HepG2 (cell line): ENCODE measurements at regions of chr6 and their contacts with region 1.

Region 1: DNA sequence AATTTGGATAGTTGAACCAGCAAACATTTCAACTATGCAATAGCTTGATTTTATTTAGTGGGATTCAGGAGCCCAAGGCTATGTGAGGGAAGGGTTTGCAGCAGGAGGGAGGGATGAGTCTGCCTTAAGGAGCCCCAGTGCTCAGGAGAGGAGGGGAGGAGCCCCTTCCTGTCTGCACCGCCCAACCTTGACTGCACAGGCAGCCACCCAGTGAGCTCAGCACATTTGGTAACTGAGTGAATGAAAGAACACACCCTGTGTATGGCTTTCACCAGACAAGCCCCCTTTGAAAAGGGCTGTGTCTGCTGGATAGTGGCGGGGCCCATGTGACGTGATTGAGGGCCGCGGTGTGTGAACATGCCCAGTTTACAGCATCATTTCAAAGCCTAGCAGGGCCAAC is 17.0 kb downstream of the DACT2 start:
- DNase-seq: peak; percentile 71
- ATAC-seq: peak; percentile 21
- H3K4me3 ChIP-seq: peak overlapping the region; percentile 48 to 69 (median 62)
- H3K27ac ChIP-seq: peak overlapping the region; percentile 65
- H3K4me1 ChIP-seq: peaks cover 44% of the 10 kb centered on the region
- H3K27me3 ChIP-seq: no peaks in the 10 kb centered on the region
- CTCF ChIP-seq: no peak
- EP300 ChIP-seq: no peak
- POLR2A ChIP-seq: no peak
- RAD21 ChIP-seq: no peak

Region 2: GRCh38 chr6:168194028-168194721 is 108.4 kb before region 1 on chr6:
- CTCF ChIA-PET with region 1: no interaction called
- POLR2A ChIA-PET with region 1: interaction called, 12 read pairs
- in situ Hi-C with region 1: no loop called
- intact Hi-C with region 1: no loop called
- DNase-seq: peak; percentile 60
- ATAC-seq: peak; percentile 75
- H3K4me3 ChIP-seq: peak overlapping the region in 1 of 3 experiments; percentile 17; a peak in 1 of 6 replicates
- H3K27ac ChIP-seq: no peak overlapping the region
- H3K4me1 ChIP-seq: peaks cover 69% of the 10 kb centered on the region
- H3K27me3 ChIP-seq: peaks cover 2 to 16% of the 10 kb centered on the region in 2 experiments; a peak in 4 of 5 replicates
- CTCF ChIP-seq: peak; percentile 93
- EP300 ChIP-seq: no peak
- POLR2A ChIP-seq: no peak
- RAD21 ChIP-seq: peak; percentile 94

Region 3: GRCh38 chr6:168247443-168248147 is 54.9 kb before region 1 on chr6:
- CTCF ChIA-PET with region 1: no interaction called
- POLR2A ChIA-PET with region 1: interaction called, 13 read pairs
- in situ Hi-C with region 1: no loop called
- intact Hi-C with region 1: loop called (anchors 5 kb)
- DNase-seq: peak; percentile 40
- ATAC-seq: peak; percentile 57
- H3K4me3 ChIP-seq: peak overlapping the region in 1 of 3 experiments; percentile 24; a peak in 2 of 6 replicates
- H3K27ac ChIP-seq: no peak overlapping the region
- H3K4me1 ChIP-seq: peaks cover 82% of the 10 kb centered on the region
- H3K27me3 ChIP-seq: no peaks in the 10 kb centered on the region
- CTCF ChIP-seq: no peak
- EP300 ChIP-seq: 0 out of 4 replicates have a peak, but pooled peaks of 1 of the 2 experiments have one; percentile 15
- POLR2A ChIP-seq: no peak
- RAD21 ChIP-seq: no peak

Region 4: GRCh38 chr6:168274037-168274952 is 28.2 kb before region 1 on chr6:
- CTCF ChIA-PET with region 1: no interaction called
- POLR2A ChIA-PET with region 1: interaction called, 48 read pairs
- in situ Hi-C with region 1: no loop called
- intact Hi-C with region 1: loop called (anchors 5 kb)
- DNase-seq: peak; percentile 98
- ATAC-seq: peak; percentile 90
- H3K4me3 ChIP-seq: peak overlapping the region; percentile 13 to 71 (median 45); a peak in 5 of 6 replicates
- H3K27ac ChIP-seq: peak overlapping the region; percentile 45
- H3K4me1 ChIP-seq: peaks cover 40% of the 10 kb centered on the region
- H3K27me3 ChIP-seq: no peaks in the 10 kb centered on the region; a peak in 1 of 5 replicates
- CTCF ChIP-seq: peak; percentile 22; the same call in 1 of the 2 replicates
- EP300 ChIP-seq: peak in 1 of 2 experiments; percentile 87; a peak in 1 of 4 replicates
- POLR2A ChIP-seq: no peak
- RAD21 ChIP-seq: 0 out of 2 replicates have a peak, but pooled peaks have one; percentile 25

Region 5: DNA sequence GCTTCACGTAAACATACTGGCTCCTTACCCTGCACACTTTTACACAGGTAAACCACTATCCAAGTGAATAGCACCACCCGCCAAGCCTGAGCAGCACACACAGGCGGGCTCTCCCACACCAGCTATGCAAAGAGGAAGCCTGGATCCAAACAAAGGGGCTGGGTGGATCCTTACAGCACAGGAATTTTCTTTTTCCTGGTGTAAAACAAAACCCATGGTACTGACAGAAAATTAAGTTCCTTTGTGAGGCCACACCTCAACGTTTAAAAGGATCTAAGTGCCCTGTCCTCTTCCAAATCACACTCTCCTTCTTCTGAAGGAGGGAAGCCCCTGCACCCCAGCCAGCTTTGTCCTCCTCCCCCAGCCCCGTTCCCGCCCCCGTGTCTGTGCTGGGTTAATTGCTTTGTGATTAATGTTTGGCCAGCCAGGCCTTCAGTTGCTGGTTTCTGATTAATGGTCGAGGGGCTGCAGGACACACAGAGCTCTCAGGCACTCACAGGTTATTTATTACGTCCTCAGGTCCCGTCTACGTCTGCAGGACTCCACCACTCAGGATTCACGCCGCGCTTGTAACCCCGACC is 11.0 kb after region 1 on chr6:
- CTCF ChIA-PET with region 1: no interaction called
- POLR2A ChIA-PET with region 1: interaction called, 10 read pairs
- in situ Hi-C with region 1: no loop called
- intact Hi-C with region 1: no loop called
- DNase-seq: peak; percentile 46
- ATAC-seq: peak; percentile 72
- H3K4me3 ChIP-seq: peak overlapping the region in 2 of 3 experiments; percentile 17 to 20; a peak in 1 of 6 replicates
- H3K27ac ChIP-seq: peak overlapping the region; percentile 16
- H3K4me1 ChIP-seq: peaks cover 58% of the 10 kb centered on the region
- H3K27me3 ChIP-seq: peaks cover 0 to under 1% of the 10 kb centered on the region in 2 experiments; a peak in 1 of 5 replicates
- CTCF ChIP-seq: no peak
- EP300 ChIP-seq: no peak
- POLR2A ChIP-seq: no peak
- RAD21 ChIP-seq: no peak